ENCODE measurements at regions of chr10 and their contacts with region 1.

Region 1: DNA sequence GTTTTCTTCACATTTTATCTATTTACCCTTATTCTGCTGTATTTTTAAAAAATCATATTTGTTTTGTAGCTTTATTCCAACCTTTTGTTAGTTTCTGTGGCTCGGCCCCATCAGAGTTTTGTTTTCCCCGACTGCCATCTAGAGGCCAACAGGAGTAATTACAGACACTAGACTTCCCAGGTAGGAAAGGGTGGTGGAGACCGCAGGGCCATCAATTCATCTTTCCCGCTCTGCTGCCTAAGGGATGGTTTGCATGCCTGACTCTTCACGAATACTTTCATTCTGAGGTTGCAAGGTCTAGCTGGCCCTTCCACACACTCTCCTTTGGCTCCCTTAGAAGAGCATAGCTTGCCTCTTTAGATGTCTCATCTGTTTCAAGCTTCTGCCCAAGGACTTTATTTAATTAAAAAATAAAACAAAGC is 38.3 kb downstream of the LYZL2 start:
- DNase-seq: peak; percentile 65
- H3K4me3 ChIP-seq: no peak overlapping the region
- H3K27ac ChIP-seq: no peak overlapping the region
- H3K4me1 ChIP-seq: no peaks in the 10 kb centered on the region
- H3K27me3 ChIP-seq: peaks cover 2 to 16% of the 10 kb centered on the region in 2 experiments
- CTCF ChIP-seq: peak; percentile 65 to 74
- POLR2A ChIP-seq: no peak

Region 2: GRCh38 chr10:30270247-30270646 is 321.0 kb before region 1 on chr10:
- CTCF ChIA-PET with region 1: interaction called, 39 read pairs
- POLR2A ChIA-PET with region 1: no interaction called
- dilution Hi-C with region 1: no loop called
- intact Hi-C with region 1: no loop called
- DNase-seq: peak; percentile 29
- H3K4me3 ChIP-seq: no peak overlapping the region
- H3K27ac ChIP-seq: no peak overlapping the region
- H3K4me1 ChIP-seq: no peaks in the 10 kb centered on the region
- H3K27me3 ChIP-seq: peaks cover 7 to 15% of the 10 kb centered on the region in 2 experiments
- CTCF ChIP-seq: peak in 1 of 2 donors; percentile 3
- POLR2A ChIP-seq: no peak

Region 3: DNA sequence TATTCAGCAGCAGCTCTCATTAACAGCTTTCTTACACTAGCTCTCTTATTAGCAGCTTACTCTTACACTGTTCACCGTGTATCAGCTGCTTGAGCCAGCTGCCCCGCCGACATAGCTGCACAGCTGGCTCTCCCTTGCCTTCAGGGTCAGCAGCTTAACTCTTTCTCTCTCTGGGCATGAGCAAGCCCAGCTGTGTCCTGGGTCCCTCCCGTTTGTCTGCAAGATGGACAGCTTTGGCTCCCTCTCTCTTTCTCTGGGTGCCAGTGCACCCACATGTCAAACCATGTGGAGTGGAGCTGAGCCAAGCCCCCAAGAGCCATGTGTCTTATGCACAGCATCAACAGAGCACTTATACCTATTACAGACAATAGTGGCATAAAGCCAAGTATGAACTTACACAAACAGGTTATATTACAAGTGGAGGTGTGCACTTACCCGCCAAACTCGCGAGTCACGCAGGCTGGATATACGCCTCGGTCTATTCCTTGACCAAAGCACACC is 206.5 kb before region 1 on chr10:
- CTCF ChIA-PET with region 1: interaction called, 169 read pairs
- POLR2A ChIA-PET with region 1: no interaction called
- dilution Hi-C with region 1: no loop called
- intact Hi-C with region 1: no loop called
- DNase-seq: no peak
- H3K4me3 ChIP-seq: no peak overlapping the region
- H3K27ac ChIP-seq: no peak overlapping the region
- H3K4me1 ChIP-seq: no peaks in the 10 kb centered on the region
- H3K27me3 ChIP-seq: peaks cover 0 to 10% of the 10 kb centered on the region in 2 experiments
- CTCF ChIP-seq: no peak
- POLR2A ChIP-seq: no peak

Region 4: DNA sequence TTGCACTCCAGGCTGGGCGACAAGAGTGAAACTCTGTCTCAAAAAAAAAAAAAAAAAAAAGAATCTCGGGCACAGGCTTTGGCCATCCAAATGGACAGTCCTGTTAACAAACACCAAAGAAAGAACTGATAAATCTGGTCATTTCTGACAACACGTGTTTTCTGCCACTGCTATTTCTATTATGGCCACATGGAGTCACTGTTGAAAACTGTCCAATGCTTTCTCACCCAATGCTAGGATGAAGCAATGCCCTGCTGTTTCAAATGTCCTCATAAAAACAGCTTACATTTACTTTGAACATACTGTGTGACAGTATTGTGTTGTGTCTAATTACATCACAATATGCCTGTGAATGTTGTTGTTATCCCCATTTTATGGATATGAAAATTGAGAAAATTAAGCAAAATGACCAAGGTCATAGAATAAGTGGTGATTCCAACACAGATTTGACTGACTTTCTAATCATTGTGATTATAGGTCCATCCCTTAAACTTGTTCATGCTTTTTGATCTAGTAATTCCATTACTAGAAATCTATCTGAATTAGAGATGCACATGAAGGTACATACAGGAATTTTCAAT is 177.2 kb before region 1 on chr10:
- CTCF ChIA-PET with region 1: interaction called, 100 read pairs
- POLR2A ChIA-PET with region 1: no interaction called
- dilution Hi-C with region 1: no loop called
- intact Hi-C with region 1: loop called (anchors 1 kb)
- DNase-seq: peak; percentile 69
- H3K4me3 ChIP-seq: no peak overlapping the region
- H3K27ac ChIP-seq: no peak overlapping the region
- H3K4me1 ChIP-seq: peaks cover 2% of the 10 kb centered on the region
- H3K27me3 ChIP-seq: no peaks in the 10 kb centered on the region
- CTCF ChIP-seq: peak; percentile 59 to 64
- POLR2A ChIP-seq: no peak

Region 5: GRCh38 chr10:30529373-30529998 is 61.8 kb before region 1 on chr10:
- CTCF ChIA-PET with region 1: interaction called, 19 read pairs
- POLR2A ChIA-PET with region 1: no interaction called
- dilution Hi-C with region 1: no loop called
- intact Hi-C with region 1: loop called (anchors 2 kb)
- DNase-seq: no peak
- H3K4me3 ChIP-seq: no peak overlapping the region
- H3K27ac ChIP-seq: no peak overlapping the region
- H3K4me1 ChIP-seq: no peaks in the 10 kb centered on the region
- H3K27me3 ChIP-seq: peaks cover 0 to 4% of the 10 kb centered on the region in 2 experiments
- CTCF ChIP-seq: no peak
- POLR2A ChIP-seq: no peak

Region 6: GRCh38 chr10:30562787-30563186 is 28.5 kb before region 1 on chr10:
- CTCF ChIA-PET with region 1: interaction called, 13 read pairs
- POLR2A ChIA-PET with region 1: no interaction called
- dilution Hi-C with region 1: no loop called
- intact Hi-C with region 1: no loop called
- DNase-seq: no peak
- H3K4me3 ChIP-seq: no peak overlapping the region
- H3K27ac ChIP-seq: no peak overlapping the region
- H3K4me1 ChIP-seq: no peaks in the 10 kb centered on the region
- H3K27me3 ChIP-seq: peaks cover 3 to 8% of the 10 kb centered on the region in 2 experiments
- CTCF ChIP-seq: no peak
- POLR2A ChIP-seq: no peak

Region 7: GRCh38 chr10:30671026-30671616 is 79.9 kb after region 1 on chr10:
- CTCF ChIA-PET with region 1: interaction called, 17 read pairs
- POLR2A ChIA-PET with region 1: no interaction called
- dilution Hi-C with region 1: no loop called
- intact Hi-C with region 1: no loop called
- DNase-seq: peak; percentile 90
- H3K4me3 ChIP-seq: peak overlapping the region in 1 of 3 experiments; percentile 44
- H3K27ac ChIP-seq: no peak overlapping the region
- H3K4me1 ChIP-seq: peaks cover 15% of the 10 kb centered on the region
- H3K27me3 ChIP-seq: no peaks in the 10 kb centered on the region
- CTCF ChIP-seq: peak; percentile 62
- POLR2A ChIP-seq: no peak